Heart right ventricle (tissue), 16 donors: ENCODE measurements at regions of chr1 and their contacts with region 1.

Region 1: GRCh38 chr1:9376886-9377333 is 84.2 kb downstream of the SPSB1 start:
- DNase-seq: peak in 1 of 2 donors; percentile 41
- ATAC-seq: peak; percentile 48 to 82 (median 64)
- H3K4me3 ChIP-seq: no peak overlapping the region
- H3K27ac ChIP-seq: peak overlapping the region; percentile 18 to 83 (median 64)
- H3K4me1 ChIP-seq: peaks cover 8 to 41% (median 30%) of the 10 kb centered on the region in 9 donors
- H3K27me3 ChIP-seq: no peaks in the 10 kb centered on the region
- CTCF ChIP-seq: no peak

Region 2: GRCh38 chr1:9260059-9260766 is 116.7 kb before region 1 on chr1:
- intact Hi-C with region 1: no loop called
- DNase-seq: no peak
- ATAC-seq: no peak
- H3K4me3 ChIP-seq: no peak overlapping the region
- H3K27ac ChIP-seq: no peak overlapping the region
- H3K4me1 ChIP-seq: peaks cover 0 to 14% (median 0%) of the 10 kb centered on the region in 9 donors
- H3K27me3 ChIP-seq: no peaks in the 10 kb centered on the region
- CTCF ChIP-seq: no peak

Region 3: GRCh38 chr1:9302745-9303524 is 74.0 kb before region 1 on chr1:
- intact Hi-C with region 1: loop called in 1 of 10 experiments (anchors 5 kb)
- DNase-seq: peak in 1 of 2 donors; percentile 64
- ATAC-seq: peak; percentile 51 to 83 (median 62)
- H3K4me3 ChIP-seq: no peak overlapping the region
- H3K27ac ChIP-seq: peak overlapping the region in 9 of 10 donors; percentile 23 to 77 (median 55)
- H3K4me1 ChIP-seq: peaks cover 6 to 50% (median 32%) of the 10 kb centered on the region in 9 donors
- H3K27me3 ChIP-seq: no peaks in the 10 kb centered on the region
- CTCF ChIP-seq: peak in 1 of 9 donors; percentile 9

Region 4: GRCh38 chr1:9344435-9345200 is 32.3 kb before region 1 on chr1:
- intact Hi-C with region 1: loop called in 1 of 10 experiments (anchors 1 kb)
- DNase-seq: no peak
- ATAC-seq: peak in 1 of 8 donors; percentile 3
- H3K4me3 ChIP-seq: no peak overlapping the region
- H3K27ac ChIP-seq: no peak overlapping the region
- H3K4me1 ChIP-seq: peaks cover 4 to 39% (median 31%) of the 10 kb centered on the region in 9 donors
- H3K27me3 ChIP-seq: peaks cover 0 to 6% (median 0%) of the 10 kb centered on the region in 7 donors
- CTCF ChIP-seq: no peak